Activated CD4-positive, alpha-beta T cell treated with anti-CD3 and anti-CD28 coated beads, Interleukin-2, amount 10 ng/mL, durations not matched to agents 24 days and 14 days (primary cell): ENCODE measurements at regions of chr16 and their contacts with region 1.

Region 1: GRCh38 chr16:13919683-13920509 is at the start of gene ERCC4:
- DNase-seq: peak; percentile 100
- H3K4me3 Mint-ChIP-seq: peak within 1 kb of the TSS; percentile 95
- H3K27ac Mint-ChIP-seq: peak within 1 kb of the TSS; percentile 94
- H3K4me1 Mint-ChIP-seq: peaks cover 23% of the 10 kb centered on the region
- H3K27me3 Mint-ChIP-seq: peaks cover 11% of the 10 kb centered on the region
- total RNA-seq, gene ERCC4: 14.5 and 18.4 TPM in 2 replicates

Region 2: DNA sequence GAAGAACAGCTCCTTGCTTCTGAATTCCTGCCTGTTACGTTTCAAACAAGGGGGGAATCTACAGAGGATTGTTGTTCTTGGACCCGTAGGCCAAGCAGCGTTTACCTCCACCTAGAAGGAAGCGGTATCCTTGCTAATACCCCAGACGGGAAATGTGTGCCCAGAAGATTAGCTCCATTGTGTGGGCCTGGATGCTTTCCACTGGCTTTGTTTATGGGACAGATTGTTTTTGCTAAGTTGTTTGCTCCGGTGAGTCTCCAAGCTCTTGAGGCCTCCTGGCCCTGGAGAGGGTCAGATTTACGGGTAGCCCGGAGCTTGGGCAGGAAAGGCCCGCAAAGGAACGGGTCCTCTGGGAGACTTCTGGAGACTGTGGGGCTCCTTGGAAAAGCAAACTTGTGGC is 122.8 kb after region 1 on chr16:
- intact Hi-C with region 1: no loop called
- DNase-seq: no peak
- H3K4me3 Mint-ChIP-seq: no peak overlapping the region
- H3K27ac Mint-ChIP-seq: no peak overlapping the region
- H3K4me1 Mint-ChIP-seq: no peaks in the 10 kb centered on the region
- H3K27me3 Mint-ChIP-seq: no peaks in the 10 kb centered on the region

Region 3: DNA sequence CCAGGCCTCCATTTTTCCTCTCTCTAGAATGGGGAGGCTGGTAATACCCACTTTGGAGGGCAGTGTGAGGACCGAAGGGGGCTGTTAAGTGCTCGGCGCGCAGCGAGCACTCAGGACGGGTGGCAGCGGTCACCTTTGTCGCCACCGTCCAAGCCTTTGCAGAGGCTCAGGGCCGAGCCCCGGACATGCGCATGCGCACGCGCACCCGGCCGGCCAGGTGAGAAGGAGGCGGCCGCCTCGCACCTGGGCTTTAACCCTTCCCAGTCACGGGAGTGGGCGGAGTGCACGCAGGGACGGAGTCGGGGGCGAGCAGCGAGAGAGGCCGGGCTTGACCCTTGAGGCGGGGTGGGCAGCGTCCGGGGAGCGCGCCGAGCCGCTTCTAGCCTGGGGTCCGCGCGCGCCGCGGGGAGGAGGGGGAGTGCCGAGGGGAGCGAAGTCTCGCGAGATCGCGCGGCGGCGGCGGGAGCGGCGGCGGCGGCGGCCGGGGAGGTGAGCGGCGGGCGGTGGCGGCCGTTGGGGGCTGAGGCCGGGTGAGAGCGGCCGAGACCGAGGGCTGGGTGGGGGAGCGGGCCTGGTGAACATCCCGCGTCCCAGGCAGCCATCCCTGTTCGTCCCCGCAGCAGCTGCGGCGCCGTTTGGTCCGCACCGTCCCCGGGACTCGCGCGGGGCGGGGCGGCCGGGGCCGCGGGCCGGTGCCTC is 151.1 kb after region 1 on chr16 and contains the start of gene MRTFB:
- intact Hi-C with region 1: loop called (anchors 5 kb)
- DNase-seq: peak; percentile 95
- H3K4me3 Mint-ChIP-seq: peak within 1 kb of the TSS; percentile 91
- H3K27ac Mint-ChIP-seq: peak within 1 kb of the TSS; percentile 82
- H3K4me1 Mint-ChIP-seq: peaks cover 10% of the 10 kb centered on the region
- H3K27me3 Mint-ChIP-seq: no peaks in the 10 kb centered on the region
- total RNA-seq, gene MRTFB: 13.1 and 15.0 TPM in 2 replicates

Region 4: GRCh38 chr16:14186007-14186794 is 266.3 kb after region 1 on chr16:
- intact Hi-C with region 1: loop called (anchors 5 kb)
- DNase-seq: peak; percentile 70
- H3K4me3 Mint-ChIP-seq: peak overlapping the region; percentile 44
- H3K27ac Mint-ChIP-seq: peak overlapping the region; percentile 38
- H3K4me1 Mint-ChIP-seq: peaks cover 17% of the 10 kb centered on the region
- H3K27me3 Mint-ChIP-seq: peaks cover 2% of the 10 kb centered on the region

Region 5: DNA sequence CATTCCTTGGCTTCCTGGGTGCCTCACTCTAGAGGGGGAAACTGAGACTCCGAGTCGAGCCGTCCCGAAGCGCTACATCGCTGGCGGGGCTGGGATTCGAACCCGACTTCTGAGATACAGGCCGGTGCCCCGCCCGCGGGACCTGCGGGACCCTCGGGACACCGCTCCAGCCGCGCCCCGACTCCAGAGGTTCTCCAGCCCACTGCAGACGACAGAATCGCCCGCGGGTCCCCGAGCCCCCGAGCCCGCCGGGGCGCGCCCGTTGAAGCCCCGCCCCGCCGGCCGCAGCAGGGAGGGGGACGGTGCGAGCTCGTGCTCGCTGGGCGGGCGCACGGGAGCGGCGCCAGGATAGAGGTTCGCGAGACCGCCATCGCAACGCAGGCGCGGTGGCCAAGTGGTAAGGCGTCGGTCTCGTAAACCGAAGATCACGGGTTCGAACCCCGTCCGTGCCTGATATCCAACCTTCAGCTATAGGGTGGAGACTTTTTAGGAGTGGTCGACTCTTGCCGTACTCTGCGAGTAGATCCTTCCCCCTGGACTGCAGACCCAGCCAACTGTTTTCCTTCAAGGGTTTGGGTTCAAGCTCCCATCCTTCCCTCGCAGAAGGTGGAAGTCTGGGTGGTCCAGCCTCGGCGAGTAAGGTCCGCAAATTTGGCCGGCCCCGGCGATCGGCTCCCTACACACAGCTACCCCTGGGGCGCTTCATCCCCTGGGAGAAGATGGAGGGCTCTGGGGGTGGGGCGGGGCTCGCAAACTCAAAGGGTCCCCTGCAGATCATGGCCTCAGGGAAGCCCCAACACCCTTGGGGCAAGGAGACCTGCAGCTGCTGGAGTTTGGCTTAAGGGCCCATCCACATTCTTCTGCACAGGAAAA is 365.9 kb after region 1 on chr16:
- intact Hi-C with region 1: loop called (anchors 2 kb)
- DNase-seq: peak; percentile 99
- H3K4me3 Mint-ChIP-seq: peak overlapping the region; percentile 88
- H3K27ac Mint-ChIP-seq: peak overlapping the region; percentile 80
- H3K4me1 Mint-ChIP-seq: peaks cover 15% of the 10 kb centered on the region
- H3K27me3 Mint-ChIP-seq: peaks cover 2% of the 10 kb centered on the region

Region 6: GRCh38 chr16:14486520-14487303 is 566.8 kb after region 1 on chr16:
- intact Hi-C with region 1: no loop called
- DNase-seq: no peak
- H3K4me3 Mint-ChIP-seq: no peak overlapping the region
- H3K27ac Mint-ChIP-seq: no peak overlapping the region
- H3K4me1 Mint-ChIP-seq: peaks cover 8% of the 10 kb centered on the region
- H3K27me3 Mint-ChIP-seq: no peaks in the 10 kb centered on the region

Region 7: GRCh38 chr16:14529010-14529669 is 609.2 kb after region 1 on chr16:
- intact Hi-C with region 1: loop called (anchors 2 kb)
- DNase-seq: peak; percentile 85
- H3K4me3 Mint-ChIP-seq: no peak overlapping the region
- H3K27ac Mint-ChIP-seq: no peak overlapping the region
- H3K4me1 Mint-ChIP-seq: peaks cover 5% of the 10 kb centered on the region
- H3K27me3 Mint-ChIP-seq: no peaks in the 10 kb centered on the region

Region 8: GRCh38 chr16:14632692-14633569 is 713.0 kb after region 1 on chr16 and contains the start of gene BFAR:
- intact Hi-C with region 1: loop called (anchors 5 kb)
- DNase-seq: peak; percentile 100
- H3K4me3 Mint-ChIP-seq: peak within 1 kb of the TSS; percentile 100
- H3K27ac Mint-ChIP-seq: peak within 1 kb of the TSS; percentile 100
- H3K4me1 Mint-ChIP-seq: peaks cover 46% of the 10 kb centered on the region
- H3K27me3 Mint-ChIP-seq: no peaks in the 10 kb centered on the region
- total RNA-seq, gene BFAR: 59.3 and 63.4 TPM in 2 replicates